Posterior vena cava (tissue), 2 donors: ENCODE measurements at regions of chrX and their contacts with region 1.

Region 1: DNA sequence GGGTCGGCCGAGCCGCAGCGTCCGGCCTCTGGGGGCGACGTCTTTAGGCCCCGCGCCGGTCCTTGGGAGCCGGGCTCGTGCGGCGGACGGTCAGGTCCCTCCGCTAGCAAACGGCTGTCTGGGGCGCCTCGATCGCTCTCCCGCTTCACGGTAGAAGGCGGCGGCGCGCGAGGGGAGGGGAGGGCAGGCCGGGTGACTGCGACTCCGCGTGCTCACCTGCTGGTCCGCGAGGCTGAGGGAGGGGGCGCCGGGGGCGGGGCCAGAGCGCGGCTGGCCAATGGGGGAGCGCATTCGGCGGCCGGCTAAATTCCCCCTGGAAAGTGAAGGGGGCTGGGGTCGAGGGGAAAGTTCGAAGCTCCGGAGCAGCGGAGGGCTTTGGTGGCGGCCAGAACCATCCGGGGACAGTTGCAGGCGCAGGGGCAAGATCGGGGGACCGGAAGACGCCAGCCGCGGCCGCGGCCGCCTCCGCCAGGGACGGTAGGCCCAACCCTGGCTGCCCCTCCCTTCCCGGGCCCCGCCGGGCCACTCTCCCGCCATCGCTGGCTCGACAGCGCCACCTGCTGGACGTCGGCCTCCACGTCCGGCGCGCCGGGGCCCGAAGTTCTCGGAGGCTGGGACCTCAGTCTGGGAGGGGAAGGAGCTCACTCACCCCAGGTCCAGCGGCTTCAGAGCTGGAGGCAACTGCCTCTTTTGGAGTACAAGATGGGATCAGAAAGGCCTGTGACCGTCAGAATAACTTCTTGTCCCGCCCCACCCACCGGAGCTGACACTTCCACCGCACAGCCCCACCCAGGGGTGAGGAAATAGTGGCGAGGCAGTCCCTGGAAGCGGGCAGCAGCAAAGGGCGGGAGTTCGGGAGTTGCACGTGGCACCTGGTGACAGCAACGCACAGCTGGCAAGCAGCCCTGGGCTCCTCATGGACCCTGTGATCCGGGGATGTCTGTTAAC is 49.9 kb downstream of the ELF4 start:
- DNase-seq: peak; percentile 95

Region 2: DNA sequence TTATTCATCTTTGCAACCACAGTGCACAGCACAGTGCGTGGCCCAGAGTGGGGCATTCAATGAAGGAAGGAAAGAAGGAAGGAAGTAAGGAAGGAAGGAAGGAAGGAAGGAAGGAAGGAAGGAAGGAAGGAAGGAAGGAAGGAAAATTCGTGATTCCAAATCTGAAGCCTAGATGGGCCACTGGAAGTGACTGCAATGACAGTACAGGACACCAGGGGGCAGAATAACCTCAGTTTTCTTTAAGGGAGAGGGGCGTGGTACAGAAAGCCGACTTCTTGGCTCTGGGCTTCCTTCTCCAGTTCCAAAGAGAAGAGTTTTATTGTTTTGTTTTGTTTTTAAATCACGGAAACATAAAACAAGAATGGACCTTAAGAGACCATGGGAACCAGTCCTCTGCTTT is 453.5 kb before region 1 on chrX:
- intact Hi-C with region 1: loop called in 1 of 2 experiments (anchors 10 kb)
- DNase-seq: no peak

Region 3: GRCh38 chrX:129925305-129926092 is 134.9 kb before region 1 on chrX:
- intact Hi-C with region 1: loop called in 1 of 2 experiments (anchors 10 kb)
- DNase-seq: no peak

Region 4: DNA sequence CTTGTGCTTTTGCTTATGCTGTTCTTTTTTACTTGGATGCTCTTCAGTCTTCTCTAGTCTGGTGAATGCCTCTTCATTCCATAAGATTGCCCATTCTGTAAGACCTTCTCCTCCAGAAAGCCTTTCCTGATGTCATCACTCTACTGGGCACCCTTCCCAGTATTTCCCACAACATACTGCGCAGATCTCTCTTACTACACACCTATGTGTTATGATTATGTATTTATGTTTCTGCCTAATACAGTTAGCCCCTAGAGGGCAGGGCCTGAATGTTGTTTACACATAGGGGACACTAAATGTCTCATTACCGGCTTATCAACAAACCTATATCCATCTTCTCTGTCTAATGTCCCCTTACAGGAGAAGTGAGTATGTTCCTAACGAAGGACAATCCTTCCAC is 84.1 kb after region 1 on chrX:
- intact Hi-C with region 1: no loop called
- DNase-seq: no peak

Region 5: GRCh38 chrX:130836447-130836846 is 776.1 kb after region 1 on chrX:
- intact Hi-C with region 1: no loop called
- DNase-seq: no peak